Activated B cell treated with CpG ODN at 0.5 μM for 24 hours (primary cell): ENCODE measurements at regions of chr4 and their contacts with region 1.

Region 1: DNA sequence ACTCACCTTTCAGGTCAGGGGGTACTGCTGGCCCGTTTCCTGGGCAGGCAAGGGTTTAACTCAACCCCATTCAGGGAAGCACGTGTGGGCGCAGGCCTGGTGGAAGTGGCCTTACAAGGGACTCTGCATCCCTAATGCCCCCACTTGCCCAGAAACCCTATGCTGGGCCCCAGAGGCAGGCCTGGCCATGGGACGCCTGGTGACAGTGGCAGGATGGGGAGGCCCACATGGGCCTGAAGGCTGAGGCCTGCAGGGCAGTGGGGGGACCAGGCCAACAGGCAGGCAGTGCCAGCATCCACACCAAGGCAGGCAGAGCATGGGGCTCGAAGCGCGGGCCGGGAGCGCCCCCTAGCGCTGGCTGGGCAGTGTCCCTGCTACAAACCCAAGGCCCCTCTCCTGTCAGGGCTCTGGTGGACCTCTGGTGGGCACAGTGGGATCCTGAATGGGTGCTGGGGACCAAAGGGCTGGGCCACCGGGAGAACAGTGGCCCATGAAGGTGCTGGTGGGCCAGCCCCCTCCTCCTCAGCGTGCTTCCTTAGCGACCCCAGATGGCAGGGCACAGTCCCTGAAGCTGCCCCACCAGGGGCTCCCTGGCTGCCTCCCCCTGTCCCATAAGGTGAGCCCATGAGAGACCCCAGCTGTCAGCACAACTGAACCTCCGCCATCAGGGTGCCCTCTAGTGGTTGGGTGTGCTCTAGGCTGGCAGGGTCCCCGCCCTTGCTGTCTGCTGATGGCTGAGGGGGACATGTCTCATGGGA is 16.8 kb downstream of the FGFR3 start:
- DNase-seq: peak; percentile 70
- ATAC-seq: peak; percentile 75
- H3K4me3 Mint-ChIP-seq: no peak overlapping the region
- H3K27ac Mint-ChIP-seq: no peak overlapping the region
- H3K4me1 Mint-ChIP-seq: no peaks in the 10 kb centered on the region
- H3K27me3 Mint-ChIP-seq: no peaks in the 10 kb centered on the region
- CTCF ChIP-seq: no peak

Region 2: DNA sequence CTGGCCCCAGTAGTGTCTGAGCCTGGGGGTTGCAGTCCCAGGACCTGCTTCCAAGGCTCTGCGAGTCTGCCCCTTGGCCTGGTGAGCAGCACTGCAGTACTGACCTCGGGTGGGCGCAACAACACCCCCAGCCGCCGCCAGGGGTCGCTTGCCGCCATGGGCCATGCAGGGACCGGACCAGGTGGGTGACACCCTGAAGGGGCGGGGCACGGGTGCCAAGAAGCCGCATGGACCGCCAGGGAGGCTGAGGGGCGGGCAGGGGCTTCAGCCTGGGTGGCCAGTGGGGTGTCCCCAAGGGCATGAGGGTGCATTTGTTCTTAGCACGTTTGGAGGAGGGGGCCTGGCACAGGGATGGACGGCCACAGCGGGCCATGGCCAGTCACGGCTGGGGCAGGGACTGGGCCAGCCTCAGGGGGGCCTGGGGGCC is 63.7 kb before region 1 on chr4:
- CTCF ChIA-PET with region 1: interaction called, 7 read pairs
- POLR2A ChIA-PET with region 1: no interaction called
- intact Hi-C with region 1: loop called (anchors 1 kb)
- DNase-seq: peak; percentile 84
- ATAC-seq: peak; percentile 95
- H3K4me3 Mint-ChIP-seq: no peak overlapping the region
- H3K27ac Mint-ChIP-seq: no peak overlapping the region
- H3K4me1 Mint-ChIP-seq: no peaks in the 10 kb centered on the region
- H3K27me3 Mint-ChIP-seq: no peaks in the 10 kb centered on the region
- CTCF ChIP-seq: peak; percentile 71

Region 3: DNA sequence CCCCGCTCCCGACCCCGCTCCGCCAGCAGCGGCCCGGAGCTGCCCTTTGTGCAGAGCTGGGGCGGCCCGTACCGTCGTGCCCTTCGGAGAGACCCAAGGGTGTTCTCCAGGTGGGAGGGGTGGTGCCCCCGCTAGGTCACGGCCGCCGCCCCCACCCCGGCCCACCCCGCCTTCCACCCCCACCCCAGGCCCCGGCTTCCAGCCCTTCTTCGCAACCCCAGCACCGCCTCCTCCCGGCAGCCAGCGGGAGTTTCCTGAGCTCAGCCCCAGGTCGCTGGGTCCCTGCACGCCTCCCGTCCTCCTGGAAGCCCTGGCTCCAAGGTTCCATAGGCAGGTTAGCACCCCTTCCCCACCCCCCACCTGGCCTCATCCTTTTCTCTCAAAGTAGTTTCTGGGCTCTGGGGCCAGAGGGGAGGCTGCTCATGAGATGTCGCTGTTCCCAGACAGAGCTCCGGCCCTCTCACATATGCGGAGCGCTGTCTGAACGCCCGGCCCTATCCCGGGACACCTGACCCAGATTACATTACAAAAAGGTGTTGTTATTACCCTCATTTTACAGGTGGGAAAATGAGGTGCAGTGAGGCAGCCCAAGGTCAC is 42.1 kb before region 1 on chr4:
- CTCF ChIA-PET with region 1: no interaction called
- POLR2A ChIA-PET with region 1: interaction called, 3 read pairs
- intact Hi-C with region 1: loop called (anchors 5 kb)
- DNase-seq: no peak
- ATAC-seq: peak; percentile 43
- H3K4me3 Mint-ChIP-seq: peak overlapping the region; percentile 66
- H3K27ac Mint-ChIP-seq: no peak overlapping the region
- H3K4me1 Mint-ChIP-seq: peaks cover 17% of the 10 kb centered on the region
- H3K27me3 Mint-ChIP-seq: peaks cover 5% of the 10 kb centered on the region
- CTCF ChIP-seq: no peak

Region 4: GRCh38 chr4:1792832-1793495 is 17.0 kb before region 1 on chr4 and contains the start of gene FGFR3:
- CTCF ChIA-PET with region 1: no interaction called
- POLR2A ChIA-PET with region 1: no interaction called
- intact Hi-C with region 1: no loop called
- DNase-seq: peak; percentile 53
- ATAC-seq: peak; percentile 91
- H3K4me3 Mint-ChIP-seq: peak within 1 kb of the TSS; percentile 53
- H3K27ac Mint-ChIP-seq: no peak within 1 kb of the TSS
- H3K4me1 Mint-ChIP-seq: peaks cover 2% of the 10 kb centered on the region
- H3K27me3 Mint-ChIP-seq: peaks cover 12% of the 10 kb centered on the region
- CTCF ChIP-seq: no peak
- total RNA-seq, gene FGFR3: 0.10 and 0.40 TPM in 2 replicates

Region 5: DNA sequence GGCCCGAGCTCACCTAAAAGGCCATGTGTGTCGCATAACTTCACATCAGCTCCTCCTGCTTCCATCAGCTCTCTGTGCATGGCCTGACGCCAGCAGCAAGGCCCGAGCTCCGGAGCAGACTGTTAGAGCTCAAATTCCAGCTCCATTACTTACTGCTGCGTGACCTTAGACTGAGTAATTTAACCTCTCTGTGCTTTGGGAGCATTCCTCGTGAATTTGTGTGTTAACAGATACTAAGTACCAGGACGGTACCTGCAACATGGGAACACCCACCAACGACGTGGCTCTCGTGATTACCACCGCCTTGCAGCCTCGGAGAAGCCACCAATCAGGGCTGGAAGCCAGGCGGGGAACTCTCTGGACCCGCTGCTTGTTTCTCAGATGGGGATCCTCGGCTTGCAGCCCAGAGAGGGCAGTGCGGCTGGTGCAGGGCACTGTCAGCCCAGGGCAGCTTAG is 33.1 kb after region 1 on chr4:
- CTCF ChIA-PET with region 1: no interaction called
- POLR2A ChIA-PET with region 1: no interaction called
- intact Hi-C with region 1: no loop called
- DNase-seq: no peak
- ATAC-seq: no peak
- H3K4me3 Mint-ChIP-seq: no peak overlapping the region
- H3K27ac Mint-ChIP-seq: no peak overlapping the region
- H3K4me1 Mint-ChIP-seq: no peaks in the 10 kb centered on the region
- H3K27me3 Mint-ChIP-seq: no peaks in the 10 kb centered on the region
- CTCF ChIP-seq: no peak

Region 6: GRCh38 chr4:1899149-1900086 is 89.5 kb after region 1 on chr4:
- CTCF ChIA-PET with region 1: no interaction called
- POLR2A ChIA-PET with region 1: no interaction called
- intact Hi-C with region 1: loop called (anchors 1 kb)
- DNase-seq: peak; percentile 44
- ATAC-seq: peak; percentile 95
- H3K4me3 Mint-ChIP-seq: no peak overlapping the region
- H3K27ac Mint-ChIP-seq: no peak overlapping the region
- H3K4me1 Mint-ChIP-seq: peaks cover 6% of the 10 kb centered on the region
- H3K27me3 Mint-ChIP-seq: no peaks in the 10 kb centered on the region
- CTCF ChIP-seq: peak; percentile 67